ENCODE measurements at regions of chr17 and their contacts with region 1.

Region 1: GRCh38 chr17:67272312-67273050 is 27.5 kb upstream of the HELZ start:
- DNase-seq: peak in 3 of 9 experiments; percentile 8 to 56 (median 45)
- ATAC-seq: peak; percentile 56
- H3K4me3 ChIP-seq: no peak overlapping the region
- H3K4me3 Mint-ChIP-seq: no peak overlapping the region
- H3K27ac ChIP-seq: no peak overlapping the region
- H3K27ac Mint-ChIP-seq: no peak overlapping the region
- H3K4me1 ChIP-seq: no peaks in the 10 kb centered on the region
- H3K4me1 Mint-ChIP-seq: no peaks in the 10 kb centered on the region
- H3K27me3 ChIP-seq: no peaks in the 10 kb centered on the region
- H3K27me3 Mint-ChIP-seq: no peaks in the 10 kb centered on the region
- CTCF ChIP-seq: no peak

Region 2: GRCh38 chr17:67293251-67294203 is 21.0 kb after region 1 on chr17:
- CTCF ChIA-PET with region 1: interaction called, 11 read pairs
- POLR2A ChIA-PET with region 1: no interaction called
- intact Hi-C with region 1: no loop called
- DNase-seq: peak; percentile 37 to 83 (median 69)
- ATAC-seq: peak; percentile 97
- H3K4me3 ChIP-seq: peak overlapping the region in 1 of 2 experiments; percentile 12
- H3K4me3 Mint-ChIP-seq: peak overlapping the region; percentile 57
- H3K27ac ChIP-seq: no peak overlapping the region
- H3K27ac Mint-ChIP-seq: no peak overlapping the region
- H3K4me1 ChIP-seq: no peaks in the 10 kb centered on the region
- H3K4me1 Mint-ChIP-seq: peaks cover 3% of the 10 kb centered on the region
- H3K27me3 ChIP-seq: no peaks in the 10 kb centered on the region
- H3K27me3 Mint-ChIP-seq: no peaks in the 10 kb centered on the region
- CTCF ChIP-seq: peak; percentile 74

Region 3: DNA sequence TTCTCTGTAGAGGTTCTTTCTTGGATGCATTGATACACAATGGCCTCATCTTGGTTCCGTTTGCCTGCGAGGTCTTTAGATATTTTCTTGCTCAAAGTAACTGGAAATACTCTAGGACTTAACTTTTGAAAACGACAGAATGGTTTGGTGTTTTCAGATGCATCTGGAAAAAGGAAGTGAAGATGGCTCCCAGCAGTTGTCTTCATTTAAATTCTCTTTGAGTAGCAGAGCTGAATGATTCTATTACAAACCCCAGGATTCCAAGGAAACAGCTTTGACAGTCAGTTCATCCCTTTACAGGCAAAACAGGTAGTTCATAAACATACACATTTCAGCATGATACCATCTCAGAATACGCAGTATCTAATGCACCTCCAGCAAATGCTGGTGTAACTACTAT is 39.1 kb after region 1 on chr17:
- CTCF ChIA-PET with region 1: no interaction called
- POLR2A ChIA-PET with region 1: no interaction called
- intact Hi-C with region 1: no loop called
- DNase-seq: no peak
- ATAC-seq: no peak
- H3K4me3 ChIP-seq: no peak overlapping the region
- H3K4me3 Mint-ChIP-seq: no peak overlapping the region
- H3K27ac ChIP-seq: no peak overlapping the region
- H3K27ac Mint-ChIP-seq: no peak overlapping the region
- H3K4me1 ChIP-seq: no peaks in the 10 kb centered on the region
- H3K4me1 Mint-ChIP-seq: no peaks in the 10 kb centered on the region
- H3K27me3 ChIP-seq: no peaks in the 10 kb centered on the region
- H3K27me3 Mint-ChIP-seq: no peaks in the 10 kb centered on the region
- CTCF ChIP-seq: no peak

Measured in CD8-positive, alpha-beta T cell (primary cell).